Cardiac septum (tissue), 1 donor: ENCODE measurements at regions of chr4 and their contacts with region 1.

Region 1: DNA sequence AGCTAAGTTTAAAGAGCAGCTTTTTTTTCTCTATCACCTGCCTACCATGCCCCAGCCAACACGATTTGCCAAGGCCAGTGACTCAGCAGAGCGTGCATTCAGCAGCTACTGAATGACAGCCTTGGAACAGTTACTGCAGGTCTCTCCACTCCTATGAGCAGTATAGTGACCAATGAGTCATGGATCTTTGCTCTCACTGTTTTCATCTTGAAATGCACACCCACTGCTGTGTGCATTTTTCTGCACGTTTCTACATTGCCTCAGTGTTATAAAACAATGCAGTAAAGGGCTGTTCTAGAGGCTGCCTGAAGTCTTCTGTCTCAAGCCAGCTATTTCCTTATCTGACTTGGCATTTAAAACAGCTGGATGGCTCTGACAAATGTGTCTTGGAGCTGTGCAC is 66.0 kb upstream of the C4orf54 start:
- DNase-seq: peak; percentile 80

Region 2: DNA sequence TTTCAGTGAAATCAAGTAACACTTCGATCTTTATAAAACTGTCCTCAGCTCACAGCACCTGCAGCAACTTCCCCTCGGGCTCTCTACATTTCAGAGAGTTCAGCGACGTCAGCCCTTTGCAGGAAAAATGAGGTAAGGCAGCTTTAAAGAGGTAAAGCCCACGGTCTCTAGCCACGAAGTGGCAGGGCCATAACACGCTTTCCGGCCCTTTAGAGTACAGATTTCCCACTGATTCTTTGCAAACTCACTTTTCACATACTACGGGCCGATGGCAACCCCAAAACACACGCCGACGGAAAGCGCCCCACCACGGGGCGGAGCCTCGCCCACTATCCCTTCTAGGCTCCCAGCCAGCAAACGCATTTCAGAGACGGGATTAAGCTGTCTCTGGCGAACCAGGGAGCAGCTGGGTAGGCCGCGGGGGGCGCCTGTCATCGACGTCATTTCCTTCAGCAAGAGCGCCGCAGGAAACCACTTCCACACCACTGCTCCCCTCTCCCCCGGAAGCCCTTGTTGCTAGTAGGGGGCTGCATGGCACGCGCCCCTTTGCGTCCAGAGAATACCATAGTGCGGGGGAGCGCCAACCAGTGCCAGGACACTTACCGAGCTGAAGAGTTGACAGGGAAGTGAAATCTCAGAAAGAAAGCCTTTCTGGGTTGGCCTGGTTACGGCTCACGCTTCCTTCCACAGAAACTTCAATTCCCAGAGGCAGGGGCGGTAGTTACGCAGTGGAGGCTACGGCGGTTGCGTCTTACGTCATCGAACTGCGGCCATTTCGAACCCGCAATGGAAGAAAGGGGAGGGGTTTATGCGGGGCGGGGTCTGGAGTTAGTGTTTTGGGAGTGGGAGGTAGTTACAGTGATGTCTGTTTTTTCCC is 160.1 kb before region 1 on chr4 and contains the start of gene TRMT10A:
- intact Hi-C with region 1: loop called (anchors 5 kb)
- DNase-seq: peak; percentile 98
- total RNA-seq, gene TRMT10A: 2.7 TPM

Region 3: DNA sequence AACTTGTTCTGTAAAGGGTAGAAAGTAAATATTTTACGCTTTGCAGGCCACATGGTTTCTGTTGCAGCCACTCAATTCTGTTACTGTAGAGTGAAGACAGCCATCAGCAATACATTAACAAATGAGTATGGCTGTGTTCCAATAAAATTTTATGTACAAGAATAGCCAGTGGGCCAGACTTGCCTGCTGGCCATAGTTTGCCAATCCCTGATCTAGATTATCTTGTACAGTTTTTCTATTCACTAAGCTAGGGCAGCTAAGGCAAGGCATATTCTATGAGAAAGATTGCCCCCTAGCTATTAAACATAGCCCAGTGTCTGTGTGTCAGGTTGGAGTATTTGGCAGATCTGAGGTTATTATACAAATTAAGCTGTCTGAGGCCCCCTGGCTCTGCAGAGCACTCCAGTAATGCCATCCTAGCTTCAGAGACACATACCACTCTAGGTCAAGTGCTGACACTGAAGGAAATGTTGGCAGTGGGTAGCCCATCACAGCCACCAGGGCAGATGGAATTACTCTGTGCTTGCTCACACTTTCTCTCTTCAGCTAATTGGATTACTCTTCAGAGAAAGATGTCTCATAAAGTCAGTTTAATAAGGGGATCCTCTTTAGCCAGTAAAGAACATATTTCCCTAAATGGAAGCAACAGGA is 108.3 kb before region 1 on chr4:
- intact Hi-C with region 1: loop called (anchors 10 kb)
- DNase-seq: no peak

Region 4: GRCh38 chr4:99655308-99656081 is 68.1 kb before region 1 on chr4:
- intact Hi-C with region 1: loop called (anchors 10 kb)
- DNase-seq: no peak

Region 5: GRCh38 chr4:99683895-99684294 is 39.7 kb before region 1 on chr4:
- intact Hi-C with region 1: loop called (anchors 5 kb)
- DNase-seq: no peak

Region 6: DNA sequence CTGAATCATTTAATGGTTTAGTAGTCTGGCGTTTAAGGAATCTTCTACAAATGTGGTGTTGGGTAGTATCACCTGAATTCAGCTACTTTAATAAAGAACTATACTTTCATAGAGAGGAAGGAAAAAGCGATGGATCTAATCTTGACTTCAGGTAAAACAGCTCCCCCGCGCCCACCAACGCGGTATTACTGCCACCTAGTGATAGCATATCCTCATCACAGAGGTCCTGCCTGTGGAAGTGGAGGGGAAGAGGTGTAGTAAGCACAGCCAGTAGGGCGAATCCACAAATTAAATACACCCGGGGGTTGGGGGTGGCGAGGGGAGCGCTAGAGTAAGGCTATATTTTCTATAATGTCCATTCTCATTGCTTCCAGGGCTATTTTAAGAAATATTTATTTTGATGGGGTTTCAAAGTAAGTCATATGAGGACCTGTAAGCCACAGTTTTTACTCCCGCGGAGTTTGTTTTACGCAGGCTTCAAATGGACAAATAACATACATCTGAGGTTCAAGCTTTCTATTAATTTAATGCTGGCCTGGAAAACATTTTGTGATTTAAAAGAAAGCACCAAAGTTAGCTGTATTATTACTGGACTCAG is 84.7 kb after region 1 on chr4:
- intact Hi-C with region 1: loop called (anchors 5 kb)
- DNase-seq: peak; percentile 78